CD14-positive monocyte (primary cell): ENCODE measurements at regions of chr6 and their contacts with region 1.

Region 1: DNA sequence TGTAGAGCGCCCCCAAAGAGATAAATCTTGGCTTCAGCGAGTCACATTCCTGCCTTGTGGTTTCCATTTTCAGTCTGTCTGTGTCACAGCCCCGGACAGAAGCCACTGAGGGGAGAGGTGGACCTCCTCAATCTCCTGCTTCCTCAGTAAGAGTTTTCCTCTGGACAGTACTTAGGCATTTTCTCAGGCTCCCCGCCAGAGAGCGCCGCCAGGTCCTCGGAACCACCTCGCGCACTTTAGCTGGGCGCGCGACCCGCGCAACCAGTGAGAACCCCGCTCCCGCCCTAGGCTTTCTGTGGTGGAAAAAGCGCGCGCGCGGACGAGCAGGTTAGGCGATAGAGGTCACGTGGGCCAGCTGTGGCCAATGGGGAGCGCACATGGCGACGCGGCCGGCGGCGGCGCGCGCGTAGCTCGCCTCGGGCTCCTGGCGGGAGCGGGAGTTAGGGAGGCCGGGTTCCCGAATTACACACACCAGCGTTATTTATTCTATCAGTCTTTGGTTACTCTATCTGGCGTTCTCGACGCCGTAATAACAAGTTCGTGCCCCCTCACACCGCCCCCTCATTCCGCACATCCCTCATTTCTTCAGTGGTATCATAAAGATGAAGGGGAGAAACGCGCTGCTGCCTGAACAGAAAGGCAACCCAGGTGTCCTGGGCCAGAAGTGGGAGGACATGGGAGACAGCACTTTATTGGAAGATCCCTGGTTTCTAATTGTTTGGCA is 19.4 kb downstream of the PXT1 start:
- DNase-seq: peak; percentile 97 to 98 (median 98)
- H3K4me3 ChIP-seq: peak overlapping the region; percentile 55 to 91 (median 82)
- H3K4me3 Mint-ChIP-seq: peak overlapping the region; percentile 84 to 94
- H3K27ac ChIP-seq: peak overlapping the region; percentile 25 to 80
- H3K27ac Mint-ChIP-seq: peak overlapping the region; percentile 79 to 94 (median 88)
- H3K4me1 ChIP-seq: peaks cover 25 to 28% of the 10 kb centered on the region in 2 donors
- H3K4me1 Mint-ChIP-seq: peaks cover 34% of the 10 kb centered on the region
- H3K27me3 ChIP-seq: no peaks in the 10 kb centered on the region
- H3K27me3 Mint-ChIP-seq: peaks cover 0 to 4% (median 2%) of the 10 kb centered on the region in 3 donors
- CTCF ChIP-seq: peak; percentile 79

Region 2: DNA sequence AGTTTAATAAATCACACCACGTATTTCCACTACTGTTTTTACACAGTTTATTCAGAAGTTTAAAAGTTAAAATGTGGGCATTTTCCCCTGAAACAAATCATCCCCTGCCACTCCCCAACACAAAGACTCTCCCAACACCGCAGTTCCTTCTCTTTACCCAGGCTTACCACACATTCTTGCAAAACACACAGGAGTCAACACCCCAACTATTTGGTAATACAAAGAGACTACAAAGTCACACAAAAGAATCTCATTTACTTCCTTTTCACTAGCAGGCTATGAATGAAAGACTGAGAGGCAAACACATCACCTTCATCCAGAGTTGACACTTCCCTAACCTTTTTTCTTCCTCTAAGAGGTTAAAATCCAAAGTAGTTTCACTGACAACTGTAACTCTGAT is 70.6 kb after region 1 on chr6:
- intact Hi-C with region 1: loop called in 1 of 2 experiments (anchors 5 kb)
- DNase-seq: peak; percentile 75 to 88 (median 87)
- H3K4me3 ChIP-seq: peak overlapping the region in 1 of 3 experiments; percentile 65
- H3K4me3 Mint-ChIP-seq: peak overlapping the region; percentile 37 to 64
- H3K27ac ChIP-seq: peak overlapping the region; percentile 88 to 90
- H3K27ac Mint-ChIP-seq: peak overlapping the region; percentile 87 to 97 (median 95)
- H3K4me1 ChIP-seq: peaks cover 45 to 48% of the 10 kb centered on the region in 2 donors
- H3K4me1 Mint-ChIP-seq: peaks cover 48% of the 10 kb centered on the region
- H3K27me3 ChIP-seq: no peaks in the 10 kb centered on the region
- H3K27me3 Mint-ChIP-seq: peaks cover 0 to 3% (median 0%) of the 10 kb centered on the region in 3 donors
- CTCF ChIP-seq: no peak

Region 3: DNA sequence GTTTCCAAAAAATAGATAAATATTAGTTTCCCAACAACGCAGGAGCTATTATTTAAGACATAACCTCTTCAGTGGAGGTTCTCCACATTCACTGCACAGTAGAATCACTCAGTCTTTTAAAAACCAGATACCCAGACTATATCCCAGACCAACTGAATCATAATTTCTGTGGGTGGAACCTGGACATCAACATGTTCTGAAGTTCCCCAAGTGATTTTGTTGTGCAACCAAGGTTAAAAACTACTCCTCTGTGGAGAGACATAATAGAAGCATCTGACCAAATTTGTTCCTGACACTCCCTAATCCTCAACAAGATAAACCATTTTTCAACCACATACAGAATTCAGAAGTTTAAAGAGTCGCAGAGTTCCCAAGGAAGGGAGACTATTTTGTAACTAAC is 81.7 kb after region 1 on chr6:
- intact Hi-C with region 1: no loop called
- DNase-seq: no peak
- H3K4me3 ChIP-seq: no peak overlapping the region
- H3K4me3 Mint-ChIP-seq: no peak overlapping the region
- H3K27ac ChIP-seq: peak overlapping the region in 1 of 2 donors; percentile 5
- H3K27ac Mint-ChIP-seq: peak overlapping the region in 1 of 7 donors; percentile 27
- H3K4me1 ChIP-seq: no peaks in the 10 kb centered on the region
- H3K4me1 Mint-ChIP-seq: peaks cover 2% of the 10 kb centered on the region
- H3K27me3 ChIP-seq: no peaks in the 10 kb centered on the region
- H3K27me3 Mint-ChIP-seq: peaks cover 0 to 3% (median 0%) of the 10 kb centered on the region in 3 donors
- CTCF ChIP-seq: no peak